Ovary (tissue), 10 donors: ENCODE measurements at regions of chr9 and their contacts with region 1.

Region 1: GRCh38 chr9:132235946-132236661 is 74.2 kb downstream of the NTNG2 start:
- DNase-seq: peak; percentile 62 to 85 (median 83)
- H3K4me3 ChIP-seq: no peak overlapping the region
- H3K27ac ChIP-seq: no peak overlapping the region
- H3K4me1 ChIP-seq: peaks cover 2% of the 10 kb centered on the region
- H3K27me3 ChIP-seq: no peaks in the 10 kb centered on the region
- CTCF ChIP-seq: peak; percentile 67 to 91 (median 69)
- EP300 ChIP-seq: no peak
- POLR2A ChIP-seq: no peak

Region 2: GRCh38 chr9:131590908-131591844 is 644.9 kb before region 1 on chr9:
- intact Hi-C with region 1: loop called in 1 of 4 experiments (anchors 10 kb)
- DNase-seq: peak; percentile 71 to 86 (median 82)
- H3K4me3 ChIP-seq: no peak overlapping the region
- H3K27ac ChIP-seq: no peak overlapping the region
- H3K4me1 ChIP-seq: no peaks in the 10 kb centered on the region
- H3K27me3 ChIP-seq: no peaks in the 10 kb centered on the region
- CTCF ChIP-seq: peak; percentile 53 to 87 (median 83)
- EP300 ChIP-seq: no peak
- POLR2A ChIP-seq: no peak

Region 3: GRCh38 chr9:131762356-131762932 is 473.7 kb before region 1 on chr9:
- intact Hi-C with region 1: loop called in 3 of 4 experiments (anchors 5 to 10 kb)
- DNase-seq: peak; percentile 55 to 82 (median 78)
- H3K4me3 ChIP-seq: no peak overlapping the region
- H3K27ac ChIP-seq: no peak overlapping the region
- H3K4me1 ChIP-seq: peaks cover 2% of the 10 kb centered on the region
- H3K27me3 ChIP-seq: no peaks in the 10 kb centered on the region
- CTCF ChIP-seq: peak; percentile 74 to 85 (median 81)
- EP300 ChIP-seq: no peak
- POLR2A ChIP-seq: no peak

Region 4: DNA sequence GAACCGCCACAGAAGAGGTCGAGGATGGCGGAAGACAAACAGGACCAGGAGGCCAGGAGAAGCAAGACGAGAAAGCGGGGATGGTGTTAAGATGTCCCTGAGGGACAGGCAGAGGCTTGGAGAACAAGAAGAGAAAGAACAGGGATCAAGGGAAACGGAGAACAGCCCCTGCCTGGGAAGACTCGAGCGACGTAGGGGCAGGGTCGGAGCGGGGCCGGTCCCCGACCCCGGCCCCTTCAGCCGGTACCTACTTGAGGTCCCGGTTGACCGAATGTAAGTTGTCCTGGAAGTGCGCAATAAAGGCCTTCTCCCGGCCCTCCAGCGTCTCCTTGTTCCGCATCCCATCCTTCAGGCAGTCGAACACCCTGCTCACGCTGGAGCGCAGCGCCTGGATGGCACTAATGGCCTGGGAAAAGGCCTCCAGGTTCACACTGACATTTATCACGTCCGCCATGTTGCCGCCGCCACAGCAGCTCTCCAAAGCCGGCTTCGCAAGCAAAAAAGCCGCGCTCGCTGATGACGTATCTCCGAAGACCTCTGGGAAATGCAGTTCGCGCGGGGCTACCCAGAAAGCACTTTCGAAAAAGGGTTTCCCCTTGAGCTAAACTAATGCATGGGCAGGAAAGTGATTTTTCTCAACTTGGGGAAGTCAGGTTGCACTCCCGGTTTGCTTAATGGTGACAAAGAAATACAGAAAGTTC is 156.6 kb before region 1 on chr9 and contains the start of gene MED27:
- intact Hi-C with region 1: loop called in 1 of 4 experiments (anchors 10 kb)
- DNase-seq: peak; percentile 89 to 94 (median 90)
- H3K4me3 ChIP-seq: peak within 1 kb of the TSS; percentile 69
- H3K27ac ChIP-seq: no peak within 1 kb of the TSS
- H3K4me1 ChIP-seq: peaks cover 4% of the 10 kb centered on the region
- H3K27me3 ChIP-seq: no peaks in the 10 kb centered on the region
- CTCF ChIP-seq: no peak
- EP300 ChIP-seq: no peak
- POLR2A ChIP-seq: no peak
- total RNA-seq, gene MED27: 7.6 to 24.9 (median 17.4) TPM

Region 5: DNA sequence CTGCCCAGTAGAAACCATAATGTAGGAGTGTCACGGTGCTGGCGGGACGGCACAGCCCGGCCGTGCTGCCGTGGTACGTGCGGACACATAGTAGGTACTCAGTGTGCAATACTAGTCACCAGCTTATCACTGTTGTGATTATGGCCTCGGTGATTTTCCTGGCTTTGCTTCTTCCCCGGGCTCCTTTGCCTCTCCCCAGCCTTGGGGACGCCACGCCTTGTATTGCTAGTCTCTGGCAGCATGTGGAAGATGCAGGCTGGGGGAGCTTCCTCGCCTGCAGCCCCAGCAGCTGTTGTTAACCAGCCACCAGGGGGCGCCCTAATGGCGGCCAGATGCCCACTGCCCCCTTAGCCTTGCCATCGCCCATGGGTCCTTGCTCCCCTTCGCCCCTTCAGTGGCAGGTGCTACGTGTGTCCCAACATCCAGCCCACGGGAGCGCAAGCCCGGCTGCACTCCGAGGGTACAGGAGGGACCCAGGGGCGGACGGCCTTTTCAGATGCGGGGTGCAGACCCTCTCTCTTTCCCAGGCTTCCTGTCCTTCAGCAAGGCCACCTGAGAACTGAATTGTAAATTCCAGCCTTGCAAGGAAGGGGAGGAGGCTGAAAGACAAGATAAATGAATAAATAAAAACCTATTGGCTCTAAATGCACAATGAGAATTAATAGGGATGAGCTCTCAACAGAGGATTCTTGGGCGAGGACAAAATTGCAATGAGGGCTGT is 66.3 kb before region 1 on chr9:
- intact Hi-C with region 1: loop called in 1 of 4 experiments (anchors 10 kb)
- DNase-seq: peak in 2 of 5 donors; percentile 35 to 50
- H3K4me3 ChIP-seq: no peak overlapping the region
- H3K27ac ChIP-seq: no peak overlapping the region
- H3K4me1 ChIP-seq: no peaks in the 10 kb centered on the region
- H3K27me3 ChIP-seq: no peaks in the 10 kb centered on the region
- CTCF ChIP-seq: peak in 1 of 3 donors; percentile 25
- EP300 ChIP-seq: no peak
- POLR2A ChIP-seq: no peak

Region 6: GRCh38 chr9:132401824-132402223 is 165.7 kb after region 1 on chr9:
- intact Hi-C with region 1: no loop called
- DNase-seq: no peak
- H3K4me3 ChIP-seq: no peak overlapping the region
- H3K27ac ChIP-seq: no peak overlapping the region
- H3K4me1 ChIP-seq: peaks cover 4% of the 10 kb centered on the region
- H3K27me3 ChIP-seq: no peaks in the 10 kb centered on the region
- CTCF ChIP-seq: no peak
- EP300 ChIP-seq: no peak
- POLR2A ChIP-seq: no peak